ENCODE measurements at regions of chr11 and their contacts with region 1.

Region 1: GRCh38 chr11:118145285-118146227 is 7.1 kb downstream of the SCN4B start:
- DNase-seq: peak; percentile 96
- H3K4me3 ChIP-seq: peak overlapping the region; percentile 40 to 68 (median 54)
- H3K27ac ChIP-seq: peak overlapping the region; percentile 18 to 46 (median 44)
- H3K4me1 ChIP-seq: peaks cover 0 to 8% (median 7%) of the 10 kb centered on the region in 4 donors
- H3K27me3 ChIP-seq: peaks cover 67% of the 10 kb centered on the region
- CTCF ChIP-seq: peak; percentile 87 to 97 (median 93)
- EP300 ChIP-seq: no peak
- POLR2A ChIP-seq: no peak

Region 2: GRCh38 chr11:118171269-118172062 is 25.9 kb after region 1 on chr11:
- in situ Hi-C with region 1: no loop called
- intact Hi-C with region 1: loop called (anchors 2 kb)
- DNase-seq: peak; percentile 72
- H3K4me3 ChIP-seq: no peak overlapping the region
- H3K27ac ChIP-seq: no peak overlapping the region
- H3K4me1 ChIP-seq: peaks cover 0 to 7% (median 2%) of the 10 kb centered on the region in 4 donors
- H3K27me3 ChIP-seq: peaks cover 28% of the 10 kb centered on the region
- CTCF ChIP-seq: peak; percentile 76 to 92 (median 89)
- EP300 ChIP-seq: no peak
- POLR2A ChIP-seq: no peak

Region 3: DNA sequence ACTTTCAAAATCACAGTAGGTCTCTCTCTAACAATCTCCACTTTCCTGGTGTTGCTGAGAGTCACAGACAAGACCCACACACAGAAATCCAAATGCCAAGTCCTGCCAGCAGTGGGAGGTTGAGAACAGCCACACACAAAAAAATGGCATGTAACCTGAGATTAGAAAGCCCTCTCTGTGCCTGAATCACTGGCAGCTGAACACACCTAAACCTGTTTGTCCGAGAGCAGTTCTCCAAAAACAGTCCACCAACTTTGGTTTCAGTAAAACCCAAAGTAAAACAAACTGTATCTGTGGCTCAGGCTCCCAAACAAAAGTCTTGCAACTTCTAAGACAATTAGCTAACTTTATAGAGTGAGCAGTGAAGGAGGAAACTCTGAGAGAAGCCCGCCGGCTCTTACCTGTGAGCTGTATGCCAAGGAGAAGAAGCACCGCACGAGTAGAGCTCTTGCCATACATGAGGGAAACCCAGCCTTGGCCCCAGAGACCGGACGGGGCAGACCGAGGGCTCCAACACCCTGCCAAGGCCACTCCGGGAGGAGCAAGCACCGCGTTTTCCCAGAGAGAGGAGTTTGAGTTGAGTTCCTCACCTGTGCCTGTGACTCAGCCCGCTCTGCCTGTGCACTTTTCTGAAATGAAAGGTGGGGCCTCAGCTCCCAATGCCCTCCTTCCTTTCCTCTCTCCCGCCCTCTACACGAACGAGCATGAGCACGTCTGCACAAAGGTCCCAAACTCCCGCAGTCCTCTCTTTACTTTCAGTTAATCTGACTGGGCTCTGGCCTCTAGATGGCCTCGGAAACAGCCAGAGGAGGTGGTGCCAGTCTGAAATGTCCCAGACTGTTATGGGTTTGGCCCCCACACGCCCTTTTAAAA is 118.4 kb after region 1 on chr11 and contains the start of gene MPZL2:
- in situ Hi-C with region 1: no loop called
- intact Hi-C with region 1: no loop called
- DNase-seq: peak; percentile 86
- H3K4me3 ChIP-seq: peak within 1 kb of the TSS in 3 of 4 donors; percentile 39 to 52 (median 43)
- H3K27ac ChIP-seq: peak within 1 kb of the TSS; percentile 78 to 87 (median 83)
- H3K4me1 ChIP-seq: peaks cover 0 to 26% (median 20%) of the 10 kb centered on the region in 4 donors
- H3K27me3 ChIP-seq: peaks cover 18% of the 10 kb centered on the region
- CTCF ChIP-seq: peak in 1 of 5 experiments; percentile 15
- EP300 ChIP-seq: no peak
- POLR2A ChIP-seq: peak; percentile 86
- total RNA-seq, gene MPZL2: 59.5 to 86.5 (median 75.0) TPM

Region 4: GRCh38 chr11:118359295-118359958 is 213.9 kb after region 1 on chr11 and contains the start of gene UBE4A:
- in situ Hi-C with region 1: loop called in 1 of 4 experiments (anchors 10 kb)
- intact Hi-C with region 1: no loop called
- DNase-seq: peak; percentile 97
- H3K4me3 ChIP-seq: peak within 1 kb of the TSS; percentile 59 to 93 (median 70)
- H3K27ac ChIP-seq: peak within 1 kb of the TSS; percentile 52 to 85 (median 75)
- H3K4me1 ChIP-seq: peaks cover 6 to 17% (median 12%) of the 10 kb centered on the region in 4 donors
- H3K27me3 ChIP-seq: no peaks in the 10 kb centered on the region
- CTCF ChIP-seq: no peak
- EP300 ChIP-seq: no peak
- POLR2A ChIP-seq: peak; percentile 73
- total RNA-seq, gene UBE4A: 42.3 to 54.3 (median 49.2) TPM

Region 5: DNA sequence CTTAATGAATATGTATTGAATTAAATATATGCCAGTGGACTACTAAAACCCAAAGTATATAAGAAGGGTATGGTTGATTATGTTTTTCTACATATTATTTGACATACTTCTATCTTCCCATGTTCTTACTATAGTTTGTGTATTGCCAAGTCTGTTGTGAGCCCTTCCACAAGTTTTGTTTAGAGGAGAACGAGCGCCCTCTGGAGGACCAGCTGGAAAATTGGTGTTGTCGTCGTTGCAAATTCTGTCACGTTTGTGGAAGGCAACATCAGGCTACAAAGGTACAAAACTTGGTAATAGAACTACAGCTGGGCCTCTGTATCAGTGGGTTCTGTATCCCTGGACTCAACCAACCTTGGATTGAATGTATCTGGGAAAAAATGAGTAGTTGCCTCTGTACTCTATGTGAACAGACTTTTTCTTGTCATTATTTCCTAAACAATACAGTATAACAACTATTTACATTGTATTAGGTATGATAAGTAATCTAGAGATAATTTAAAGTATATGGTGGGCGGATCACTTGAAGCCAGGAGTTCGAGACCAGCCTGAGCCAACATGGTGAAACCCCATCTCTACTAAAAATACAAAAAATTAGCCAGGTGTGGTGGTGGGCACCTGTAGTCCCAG is 343.0 kb after region 1 on chr11:
- in situ Hi-C with region 1: loop called in 1 of 4 experiments (anchors 25 kb)
- intact Hi-C with region 1: no loop called
- DNase-seq: peak; percentile 68
- H3K4me3 ChIP-seq: no peak overlapping the region
- H3K27ac ChIP-seq: no peak overlapping the region
- H3K4me1 ChIP-seq: no peaks in the 10 kb centered on the region
- H3K27me3 ChIP-seq: no peaks in the 10 kb centered on the region
- CTCF ChIP-seq: peak; percentile 76 to 80 (median 78)
- EP300 ChIP-seq: no peak
- POLR2A ChIP-seq: no peak